A673 (cell line): ENCODE measurements at regions of chr16 and their contacts with region 1.

Region 1: DNA sequence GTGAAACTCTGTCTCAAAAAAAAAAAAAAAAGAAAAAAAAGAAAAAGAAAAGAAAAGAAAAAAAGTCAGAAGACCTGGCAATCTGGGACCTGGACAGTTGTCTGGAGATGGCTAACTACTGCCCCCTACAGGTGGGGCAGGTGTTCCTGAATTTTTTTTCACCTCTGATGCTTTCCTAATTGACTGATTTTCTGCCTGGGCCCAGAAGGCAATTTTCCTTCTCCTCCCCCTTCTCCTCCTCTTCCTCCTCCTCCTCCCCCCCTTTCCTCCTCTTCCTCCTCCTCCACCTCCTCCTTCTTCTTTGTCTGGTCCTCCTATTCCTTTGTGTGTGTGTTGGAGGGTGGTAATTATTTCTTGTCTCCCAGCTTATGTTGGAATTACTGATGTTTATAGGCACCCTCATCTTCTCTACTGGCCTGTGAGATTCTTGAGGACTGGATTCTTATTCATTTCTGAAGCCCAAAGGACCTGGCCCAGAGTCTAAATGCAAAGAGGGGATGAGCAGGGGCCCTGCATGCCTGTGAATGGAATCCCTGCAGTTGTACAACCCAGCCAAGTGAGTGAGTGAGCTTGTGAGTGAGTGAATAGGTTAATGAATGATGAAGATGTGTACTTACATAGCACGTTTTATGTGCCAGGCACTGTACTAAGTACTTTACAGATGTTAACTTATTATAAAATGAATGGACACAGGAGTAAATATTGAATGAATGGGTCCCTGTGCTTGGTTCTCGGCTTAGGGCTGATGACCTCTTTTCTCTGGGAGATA is 26.9 kb downstream of the IRX5 start:
- DNase-seq: peak; percentile 52
- H3K4me3 ChIP-seq: no peak overlapping the region
- H3K27ac ChIP-seq: no peak overlapping the region
- H3K4me1 ChIP-seq: no peaks in the 10 kb centered on the region
- H3K27me3 ChIP-seq: no peaks in the 10 kb centered on the region
- CTCF ChIP-seq: peak; percentile 57

Region 2: GRCh38 chr16:54538266-54538665 is 419.3 kb before region 1 on chr16:
- CTCF ChIA-PET with region 1: no interaction called
- POLR2A ChIA-PET with region 1: no interaction called
- intact Hi-C with region 1: loop called (anchors 10 kb)
- DNase-seq: peak; percentile 26
- H3K4me3 ChIP-seq: no peak overlapping the region
- H3K27ac ChIP-seq: no peak overlapping the region
- H3K4me1 ChIP-seq: no peaks in the 10 kb centered on the region
- H3K27me3 ChIP-seq: peaks cover 6% of the 10 kb centered on the region
- CTCF ChIP-seq: peak; percentile 48; the same call in 1 of the 2 replicates